Ascending aorta (tissue), 2 donors: ENCODE measurements at regions of chr4 and their contacts with region 1.

Region 1: GRCh38 chr4:74874753-74875367 is 58.1 kb upstream of the PARM1 start:
- DNase-seq: peak in 1 of 2 donors; percentile 67
- H3K4me3 ChIP-seq: peak overlapping the region in 1 of 2 donors; percentile 33
- H3K27ac ChIP-seq: peak overlapping the region; percentile 52 to 70
- H3K4me1 ChIP-seq: peaks cover 0 to 18% of the 10 kb centered on the region in 2 donors
- H3K27me3 ChIP-seq: no peaks in the 10 kb centered on the region
- CTCF ChIP-seq: peak; percentile 65 to 90 (median 90)

Region 2: GRCh38 chr4:74855879-74856278 is 19.0 kb before region 1 on chr4:
- intact Hi-C with region 1: no loop called
- DNase-seq: no peak
- H3K4me3 ChIP-seq: no peak overlapping the region
- H3K27ac ChIP-seq: no peak overlapping the region
- H3K4me1 ChIP-seq: no peaks in the 10 kb centered on the region
- H3K27me3 ChIP-seq: no peaks in the 10 kb centered on the region
- CTCF ChIP-seq: no peak

Region 3: DNA sequence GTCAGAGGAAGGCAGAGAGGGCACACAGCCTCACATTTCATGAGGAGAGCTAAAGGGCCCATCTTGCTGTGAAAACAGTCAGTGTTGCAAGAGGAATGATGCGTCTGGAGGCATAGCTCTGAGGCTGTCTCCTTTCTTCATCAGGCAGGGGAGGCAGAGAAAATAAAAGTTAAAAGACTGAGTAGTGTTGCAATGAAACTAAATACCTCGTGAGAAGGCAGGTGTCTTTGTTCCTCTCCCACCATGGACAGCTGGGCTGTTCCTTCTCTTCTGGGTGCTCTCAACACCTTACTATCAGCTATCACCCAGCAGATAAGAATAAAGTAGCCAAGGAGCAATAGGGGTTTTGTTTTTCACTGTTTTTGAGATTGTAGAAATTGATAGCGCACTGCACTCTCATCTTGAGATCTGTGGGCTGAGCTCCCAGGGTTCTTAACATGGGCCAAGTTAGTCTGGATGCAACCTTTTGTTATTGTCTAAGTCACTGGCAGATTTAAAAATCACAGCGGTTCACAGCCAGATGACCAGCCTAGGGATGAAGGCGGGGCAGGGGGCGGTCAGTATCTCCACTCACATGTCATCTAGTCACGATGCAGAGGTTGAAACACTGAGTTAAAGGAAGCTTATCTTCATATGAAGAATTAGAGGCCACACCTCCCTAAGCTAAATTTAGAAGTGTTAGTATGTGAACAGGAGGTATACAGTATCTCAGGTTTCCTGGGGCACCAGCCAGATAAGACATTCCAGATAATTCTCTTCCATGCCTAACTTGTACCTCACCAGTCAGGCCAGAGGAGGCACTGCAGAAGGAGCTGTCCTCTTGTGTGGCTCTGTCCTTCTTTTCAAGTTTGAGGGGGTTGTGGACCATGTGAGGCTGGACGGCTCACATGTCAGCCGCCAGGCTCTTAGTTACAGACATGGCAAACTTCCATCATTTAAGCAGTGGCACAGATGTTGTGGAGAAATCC is 94.9 kb after region 1 on chr4:
- intact Hi-C with region 1: loop called (anchors 10 kb)
- DNase-seq: no peak
- H3K4me3 ChIP-seq: no peak overlapping the region
- H3K27ac ChIP-seq: peak overlapping the region; percentile 58 to 75
- H3K4me1 ChIP-seq: peaks cover 6 to 29% of the 10 kb centered on the region in 2 donors
- H3K27me3 ChIP-seq: no peaks in the 10 kb centered on the region
- CTCF ChIP-seq: peak in 2 of 3 experiments; percentile 41 to 48

Region 4: DNA sequence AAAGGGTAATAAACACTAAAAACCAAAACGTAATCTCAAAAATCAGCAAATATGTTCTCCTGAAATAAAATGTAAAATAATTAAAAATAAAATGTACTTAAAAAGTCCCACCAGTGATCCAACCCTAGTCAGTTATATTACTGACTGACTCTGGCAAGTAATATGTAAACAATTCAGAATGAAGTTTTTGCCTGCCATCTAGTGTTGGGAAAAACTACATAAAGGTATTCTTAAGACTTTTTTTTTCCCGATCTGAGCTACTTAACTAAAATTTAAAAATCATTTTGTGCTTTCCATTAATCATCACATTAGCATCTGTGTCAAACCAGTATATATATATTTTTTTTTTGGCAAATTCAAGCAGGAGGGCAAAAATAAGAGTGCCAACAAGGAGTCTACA is 615.3 kb after region 1 on chr4:
- intact Hi-C with region 1: loop called (anchors 2 kb)
- DNase-seq: no peak
- H3K4me3 ChIP-seq: no peak overlapping the region
- H3K27ac ChIP-seq: peak overlapping the region in 1 of 2 donors; percentile 19
- H3K4me1 ChIP-seq: no peaks in the 10 kb centered on the region
- H3K27me3 ChIP-seq: no peaks in the 10 kb centered on the region
- CTCF ChIP-seq: peak in 1 of 3 experiments; percentile 52